ENCODE measurements at regions of chr5 and their contacts with region 1.

Region 1: GRCh38 chr5:156326718-156327259 is at the start of gene SGCD:
- DNase-seq: peak; percentile 58 to 80
- ATAC-seq: peak; percentile 39 to 51
- H3K4me3 ChIP-seq: peak within 1 kb of the TSS; percentile 56 to 69 (median 64)
- H3K27ac ChIP-seq: peak within 1 kb of the TSS; percentile 83 to 96 (median 90)
- H3K4me1 ChIP-seq: peaks cover 33 to 44% of the 10 kb centered on the region in 2 donors
- H3K27me3 ChIP-seq: no peaks in the 10 kb centered on the region
- CTCF ChIP-seq: peak in 1 of 5 experiments; percentile 13
- POLR2A ChIP-seq: peak in 1 of 2 donors; percentile 67
- total RNA-seq, gene SGCD: 8.2 to 53.5 (median 35.8) TPM

Region 2: GRCh38 chr5:155978850-155979249 is 347.9 kb before region 1 on chr5:
- in situ Hi-C with region 1: no loop called
- intact Hi-C with region 1: loop called (anchors 5 kb)
- DNase-seq: peak; percentile 47 to 63
- ATAC-seq: peak; percentile 94 to 98
- H3K4me3 ChIP-seq: no peak overlapping the region
- H3K27ac ChIP-seq: peak overlapping the region; percentile 62 to 70 (median 66)
- H3K4me1 ChIP-seq: peaks cover 24 to 29% of the 10 kb centered on the region in 2 donors
- H3K27me3 ChIP-seq: no peaks in the 10 kb centered on the region
- CTCF ChIP-seq: no peak
- POLR2A ChIP-seq: no peak

Region 3: GRCh38 chr5:156219483-156220005 is 107.2 kb before region 1 on chr5:
- in situ Hi-C with region 1: no loop called
- intact Hi-C with region 1: loop called (anchors 5 kb)
- DNase-seq: no peak
- ATAC-seq: peak; percentile 94 to 95
- H3K4me3 ChIP-seq: peak overlapping the region in 1 of 4 donors; percentile 16
- H3K27ac ChIP-seq: peak overlapping the region; percentile 46 to 57 (median 54)
- H3K4me1 ChIP-seq: peaks cover 20 to 27% of the 10 kb centered on the region in 2 donors
- H3K27me3 ChIP-seq: no peaks in the 10 kb centered on the region
- CTCF ChIP-seq: no peak
- POLR2A ChIP-seq: no peak

Region 4: GRCh38 chr5:156271569-156271968 is 55.2 kb before region 1 on chr5:
- in situ Hi-C with region 1: no loop called
- intact Hi-C with region 1: loop called (anchors 2 kb)
- DNase-seq: peak; percentile 57 to 66
- ATAC-seq: peak; percentile 100
- H3K4me3 ChIP-seq: no peak overlapping the region
- H3K27ac ChIP-seq: peak overlapping the region; percentile 72 to 81 (median 78)
- H3K4me1 ChIP-seq: peaks cover 26 to 32% of the 10 kb centered on the region in 2 donors
- H3K27me3 ChIP-seq: no peaks in the 10 kb centered on the region
- CTCF ChIP-seq: no peak
- POLR2A ChIP-seq: no peak

Region 5: DNA sequence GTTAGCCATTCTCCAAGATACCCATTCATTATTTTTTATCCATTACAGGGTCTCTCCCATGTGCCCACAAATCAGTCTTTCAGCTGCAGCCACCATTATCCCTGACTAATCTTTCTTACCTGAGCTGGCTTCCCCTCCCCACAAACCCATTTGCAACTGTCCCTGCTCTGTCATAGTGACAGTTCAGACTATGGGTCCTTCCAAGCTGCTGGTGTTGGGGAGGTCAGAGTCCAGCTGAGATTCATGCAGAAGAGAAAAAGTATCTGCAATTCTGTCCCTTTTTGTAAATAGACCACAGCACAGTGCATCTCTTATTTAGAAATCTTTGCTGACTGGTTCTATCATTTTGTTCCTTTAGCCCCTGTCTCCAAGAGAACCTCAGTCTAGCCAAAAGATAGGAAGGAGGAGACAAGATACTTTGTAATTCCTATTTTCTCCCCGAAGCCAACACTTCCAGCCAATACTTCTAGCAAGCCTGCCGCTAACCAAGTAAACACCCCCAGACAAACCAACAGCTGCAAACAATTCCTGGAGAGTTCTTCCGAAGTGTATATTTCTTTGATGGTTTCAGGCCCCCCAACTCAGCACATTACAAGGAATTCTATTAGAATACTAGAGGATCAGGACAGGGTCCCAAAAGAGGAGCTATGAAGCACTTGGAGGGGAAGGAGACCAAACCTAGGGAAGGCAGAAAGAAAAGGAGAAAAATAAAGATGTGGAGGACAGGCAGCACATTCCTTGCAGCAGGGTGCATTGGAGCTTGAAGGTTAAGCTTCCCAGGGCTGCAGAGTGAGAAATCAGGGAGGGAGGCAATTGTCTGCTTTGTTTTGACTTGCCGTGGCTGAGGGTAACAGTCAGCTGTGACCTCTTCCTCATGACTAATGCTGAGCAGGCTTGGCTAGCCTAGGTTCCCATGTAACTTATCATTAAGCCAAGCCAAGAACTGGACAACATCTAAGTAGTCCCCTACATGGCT is 148.7 kb after region 1 on chr5:
- in situ Hi-C with region 1: no loop called
- intact Hi-C with region 1: loop called (anchors 2 kb)
- DNase-seq: peak; percentile 64 to 80
- ATAC-seq: peak; percentile 80 to 81
- H3K4me3 ChIP-seq: no peak overlapping the region
- H3K27ac ChIP-seq: peak overlapping the region; percentile 54 to 75 (median 71)
- H3K4me1 ChIP-seq: peaks cover 43 to 54% of the 10 kb centered on the region in 2 donors
- H3K27me3 ChIP-seq: no peaks in the 10 kb centered on the region
- CTCF ChIP-seq: no peak
- POLR2A ChIP-seq: no peak

Region 6: DNA sequence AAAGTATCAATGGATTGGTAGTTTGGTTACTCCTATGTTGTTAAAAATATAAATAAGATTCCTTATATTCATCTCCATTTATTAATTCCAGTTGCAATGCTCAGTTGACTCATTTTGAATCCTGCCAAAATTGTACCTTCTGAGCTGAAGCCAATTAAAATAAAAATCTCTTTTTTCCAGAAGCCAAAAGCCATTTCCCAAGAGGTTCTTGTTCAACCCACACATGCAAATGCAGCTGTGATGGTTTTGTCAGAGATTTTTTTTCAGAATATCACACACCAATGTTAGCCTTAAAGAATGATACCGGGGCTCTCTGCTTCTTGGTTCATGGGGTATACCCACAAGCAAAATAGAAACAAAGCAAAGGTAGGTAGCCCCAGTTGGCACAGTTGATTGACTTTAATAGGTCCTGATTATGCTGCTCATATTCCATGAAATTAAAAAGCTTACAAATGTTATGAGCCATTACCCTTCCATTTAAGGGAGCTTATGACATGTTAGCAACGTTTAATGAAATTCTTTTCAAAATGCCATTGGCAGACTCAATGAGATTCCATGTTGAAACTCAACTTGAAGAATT is 208.2 kb after region 1 on chr5:
- in situ Hi-C with region 1: no loop called
- intact Hi-C with region 1: loop called (anchors 5 kb)
- DNase-seq: no peak
- ATAC-seq: no peak
- H3K4me3 ChIP-seq: no peak overlapping the region
- H3K27ac ChIP-seq: no peak overlapping the region
- H3K4me1 ChIP-seq: peaks cover 4 to 8% of the 10 kb centered on the region in 2 donors
- H3K27me3 ChIP-seq: no peaks in the 10 kb centered on the region
- CTCF ChIP-seq: no peak
- POLR2A ChIP-seq: no peak

Region 7: GRCh38 chr5:156595132-156595787 is 268.5 kb after region 1 on chr5:
- in situ Hi-C with region 1: no loop called
- intact Hi-C with region 1: loop called (anchors 2 kb)
- DNase-seq: peak; percentile 65 to 87
- ATAC-seq: peak; percentile 96 to 99
- H3K4me3 ChIP-seq: no peak overlapping the region
- H3K27ac ChIP-seq: peak overlapping the region; percentile 53 to 86 (median 71)
- H3K4me1 ChIP-seq: peaks cover 4 to 21% of the 10 kb centered on the region in 2 donors
- H3K27me3 ChIP-seq: no peaks in the 10 kb centered on the region
- CTCF ChIP-seq: peak in 3 of 5 experiments; percentile 29 to 42 (median 33)
- POLR2A ChIP-seq: no peak